WTC11 (cell line): ENCODE measurements at regions of chr3 and their contacts with region 1.

Region 1: DNA sequence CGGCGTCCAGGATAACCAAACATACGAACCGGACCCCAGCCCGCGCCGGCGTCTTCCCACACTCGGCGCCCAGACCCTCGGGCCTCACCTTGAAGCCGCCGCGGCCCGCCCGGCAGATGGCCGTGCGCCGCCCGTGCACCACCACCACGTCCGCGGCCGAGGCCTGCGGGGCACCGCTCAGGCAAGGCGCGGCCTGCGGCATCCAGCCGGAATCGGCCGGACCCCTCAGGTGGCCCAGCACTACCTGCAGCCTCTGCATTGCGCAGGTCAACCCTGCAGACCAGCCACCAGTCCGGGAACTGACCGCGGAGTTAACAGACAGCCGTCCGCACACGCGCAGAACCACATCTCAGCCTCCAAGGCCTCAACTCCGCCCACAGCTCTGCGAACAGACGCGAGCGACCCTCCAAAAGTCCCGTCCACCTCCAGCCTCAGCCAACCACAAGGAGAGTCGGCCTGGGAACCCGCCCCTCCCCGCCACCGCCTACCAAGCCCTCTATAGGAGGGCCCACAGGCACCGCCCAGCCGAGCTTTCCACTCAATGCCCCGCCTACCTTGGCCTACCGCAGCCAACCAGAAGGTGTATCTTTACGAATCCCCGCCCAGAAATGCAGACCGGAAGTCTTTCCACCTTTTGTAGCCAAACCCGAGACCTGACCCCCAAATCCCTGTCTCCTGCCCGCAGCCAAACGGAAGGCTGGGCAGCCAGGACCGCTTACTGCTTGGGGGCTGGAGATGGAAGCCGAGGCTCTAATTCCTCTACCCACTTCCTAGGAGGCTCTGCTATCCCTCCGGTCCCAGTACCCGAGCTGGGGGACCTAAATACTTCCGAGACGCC is at the start of gene ACAA1:
- DNase-seq: peak; percentile 100
- ATAC-seq: peak; percentile 93
- H3K4me3 Mint-ChIP-seq: peak within 1 kb of the TSS; percentile 88
- H3K27ac Mint-ChIP-seq: peak within 1 kb of the TSS; percentile 89
- H3K4me1 Mint-ChIP-seq: peaks cover 37% of the 10 kb centered on the region
- H3K27me3 Mint-ChIP-seq: no peaks in the 10 kb centered on the region
- CTCF ChIP-seq: no peak
- total RNA-seq, gene ACAA1: 34.4 to 46.5 TPM (median 39.0 TPM) in 3 replicates

Region 2: DNA sequence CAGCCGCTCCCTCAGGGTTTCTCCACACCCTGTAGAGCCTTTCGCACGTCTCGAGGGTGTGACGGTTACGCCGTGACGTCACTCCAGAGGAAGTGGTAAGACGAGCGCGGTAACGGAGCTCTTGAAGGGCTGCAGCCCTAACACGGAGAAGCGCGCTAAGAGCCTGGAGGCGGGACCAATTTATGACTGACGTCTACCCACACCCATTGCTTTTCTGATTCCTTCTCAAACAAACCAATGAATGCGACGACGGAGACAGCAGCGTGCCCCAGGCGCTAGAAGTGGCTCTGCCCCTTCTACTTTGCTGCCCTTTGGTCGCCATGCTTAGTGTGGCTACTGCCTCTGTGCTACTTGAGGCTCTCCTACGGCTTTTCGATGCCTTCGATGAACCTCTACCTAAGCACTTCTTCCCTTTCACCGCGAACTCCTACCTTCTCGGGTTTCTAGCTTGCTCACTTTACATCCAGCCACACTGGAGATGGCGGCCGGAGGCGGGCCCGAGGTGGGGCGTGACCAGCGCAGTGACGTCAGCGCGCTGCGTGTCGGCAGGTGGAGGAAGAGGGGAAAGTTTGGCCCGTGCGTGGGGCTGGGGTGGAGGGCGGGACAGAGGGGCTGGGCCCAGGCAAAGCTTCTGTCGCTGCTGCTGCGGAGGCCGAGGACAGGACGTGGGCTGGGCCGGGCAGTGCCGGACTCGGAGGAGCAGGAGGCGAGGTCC is 28.1 kb after region 1 on chr3 and contains the start of gene OXSR1:
- CTCF ChIA-PET with region 1: interaction called, 24 read pairs
- POLR2A ChIA-PET with region 1: interaction called, 31 read pairs
- DNase-seq: peak; percentile 92
- ATAC-seq: peak; percentile 93
- H3K4me3 Mint-ChIP-seq: peak within 1 kb of the TSS; percentile 92
- H3K27ac Mint-ChIP-seq: peak within 1 kb of the TSS; percentile 99
- H3K4me1 Mint-ChIP-seq: peaks cover 23% of the 10 kb centered on the region
- H3K27me3 Mint-ChIP-seq: no peaks in the 10 kb centered on the region
- CTCF ChIP-seq: no peak
- total RNA-seq, gene OXSR1: 49.4 to 52.4 TPM (median 50.6 TPM) in 3 replicates